IMR-90 (cell line): ENCODE measurements at regions of chr3 and their contacts with region 1.

Region 1: GRCh38 chr3:9690451-9691450 is 12.9 kb upstream of the CPNE9 start:
- DNase-seq: no peak
- ATAC-seq: peak; percentile 17
- H3K4me3 ChIP-seq: no peak overlapping the region
- H3K27ac ChIP-seq: no peak overlapping the region
- H3K4me1 ChIP-seq: no peaks in the 10 kb centered on the region
- H3K27me3 ChIP-seq: no peaks in the 10 kb centered on the region
- CTCF ChIP-seq: no peak
- POLR2A ChIP-seq: no peak
- RAD21 ChIP-seq: no peak

Region 2: DNA sequence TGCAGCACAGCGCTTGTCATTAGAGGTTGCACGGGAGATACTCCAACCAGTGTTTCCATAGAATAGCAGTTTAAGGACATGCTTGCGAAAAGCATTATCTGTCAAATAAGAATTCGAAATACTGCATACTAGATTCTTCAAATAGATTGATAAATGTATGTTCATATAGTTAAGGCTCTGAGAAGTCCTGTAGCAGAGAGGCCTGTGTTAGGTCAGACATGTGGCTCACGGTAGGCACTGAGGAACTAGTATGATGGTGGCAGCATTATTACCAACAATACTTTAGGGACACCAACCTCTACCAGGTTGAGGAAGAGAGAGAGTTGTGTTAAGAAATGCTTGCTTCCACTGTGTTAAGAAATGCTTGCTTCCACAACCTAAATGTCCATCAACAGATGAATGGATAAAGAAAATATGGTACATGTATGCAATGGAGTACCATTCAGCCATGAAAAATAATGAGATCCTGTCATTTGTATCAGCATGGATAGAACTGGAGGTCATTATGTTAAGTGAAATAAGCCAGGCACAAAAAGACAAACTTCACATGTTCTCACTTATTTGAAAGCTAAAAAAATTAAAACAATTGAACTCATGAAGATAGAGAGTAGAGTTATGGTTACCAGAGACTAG is 26.5 kb before region 1 on chr3:
- CTCF ChIA-PET with region 1: no interaction called
- POLR2A ChIA-PET with region 1: interaction called, 17 read pairs
- dilution Hi-C with region 1: no loop called
- in situ Hi-C with region 1: no loop called
- intact Hi-C with region 1: no loop called
- DNase-seq: no peak
- ATAC-seq: no peak
- H3K4me3 ChIP-seq: no peak overlapping the region
- H3K27ac ChIP-seq: no peak overlapping the region
- H3K4me1 ChIP-seq: no peaks in the 10 kb centered on the region; the same call in 1 of the 2 replicates
- H3K27me3 ChIP-seq: no peaks in the 10 kb centered on the region
- CTCF ChIP-seq: no peak
- POLR2A ChIP-seq: no peak
- RAD21 ChIP-seq: no peak

Region 3: GRCh38 chr3:10518506-10519150 is 827.9 kb after region 1 on chr3:
- CTCF ChIA-PET with region 1: no interaction called
- POLR2A ChIA-PET with region 1: no interaction called
- dilution Hi-C with region 1: no loop called
- in situ Hi-C with region 1: no loop called
- intact Hi-C with region 1: no loop called
- DNase-seq: peak; percentile 58
- ATAC-seq: peak; percentile 62
- H3K4me3 ChIP-seq: no peak overlapping the region
- H3K27ac ChIP-seq: no peak overlapping the region
- H3K4me1 ChIP-seq: peaks cover 6% of the 10 kb centered on the region; the same call in 1 of the 2 replicates
- H3K27me3 ChIP-seq: peaks cover 30% of the 10 kb centered on the region
- CTCF ChIP-seq: no peak
- POLR2A ChIP-seq: no peak
- RAD21 ChIP-seq: no peak

Region 4: DNA sequence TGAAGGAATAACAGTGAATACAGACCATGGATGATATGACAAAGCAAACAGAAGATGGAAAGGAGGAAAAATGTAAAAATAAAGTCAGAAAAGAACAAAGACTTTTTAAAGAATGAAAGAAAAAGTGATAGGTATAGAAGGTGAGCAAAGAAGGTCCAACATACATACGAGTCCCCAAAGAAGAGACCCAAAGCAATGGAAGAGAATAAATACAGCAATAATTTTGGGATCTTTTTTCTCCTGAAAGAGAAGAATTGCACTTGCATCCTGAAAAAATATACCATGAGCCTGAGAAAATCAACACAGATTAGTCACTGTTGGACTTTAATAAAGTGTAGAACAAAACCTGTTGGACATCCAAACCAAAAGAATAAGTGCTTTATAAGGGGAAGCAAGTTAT is 1216.5 kb after region 1 on chr3:
- CTCF ChIA-PET with region 1: no interaction called
- POLR2A ChIA-PET with region 1: no interaction called
- dilution Hi-C with region 1: no loop called
- in situ Hi-C with region 1: no loop called
- intact Hi-C with region 1: no loop called
- DNase-seq: no peak
- ATAC-seq: no peak
- H3K4me3 ChIP-seq: no peak overlapping the region
- H3K27ac ChIP-seq: no peak overlapping the region
- H3K4me1 ChIP-seq: no peaks in the 10 kb centered on the region
- H3K27me3 ChIP-seq: no peaks in the 10 kb centered on the region
- CTCF ChIP-seq: no peak
- POLR2A ChIP-seq: no peak
- RAD21 ChIP-seq: no peak